Activated CD8-positive, alpha-beta T cell treated with anti-CD3 and anti-CD28 coated beads for 36 hours (primary cell): ENCODE measurements at regions of chr6 and their contacts with region 1.

Region 1: DNA sequence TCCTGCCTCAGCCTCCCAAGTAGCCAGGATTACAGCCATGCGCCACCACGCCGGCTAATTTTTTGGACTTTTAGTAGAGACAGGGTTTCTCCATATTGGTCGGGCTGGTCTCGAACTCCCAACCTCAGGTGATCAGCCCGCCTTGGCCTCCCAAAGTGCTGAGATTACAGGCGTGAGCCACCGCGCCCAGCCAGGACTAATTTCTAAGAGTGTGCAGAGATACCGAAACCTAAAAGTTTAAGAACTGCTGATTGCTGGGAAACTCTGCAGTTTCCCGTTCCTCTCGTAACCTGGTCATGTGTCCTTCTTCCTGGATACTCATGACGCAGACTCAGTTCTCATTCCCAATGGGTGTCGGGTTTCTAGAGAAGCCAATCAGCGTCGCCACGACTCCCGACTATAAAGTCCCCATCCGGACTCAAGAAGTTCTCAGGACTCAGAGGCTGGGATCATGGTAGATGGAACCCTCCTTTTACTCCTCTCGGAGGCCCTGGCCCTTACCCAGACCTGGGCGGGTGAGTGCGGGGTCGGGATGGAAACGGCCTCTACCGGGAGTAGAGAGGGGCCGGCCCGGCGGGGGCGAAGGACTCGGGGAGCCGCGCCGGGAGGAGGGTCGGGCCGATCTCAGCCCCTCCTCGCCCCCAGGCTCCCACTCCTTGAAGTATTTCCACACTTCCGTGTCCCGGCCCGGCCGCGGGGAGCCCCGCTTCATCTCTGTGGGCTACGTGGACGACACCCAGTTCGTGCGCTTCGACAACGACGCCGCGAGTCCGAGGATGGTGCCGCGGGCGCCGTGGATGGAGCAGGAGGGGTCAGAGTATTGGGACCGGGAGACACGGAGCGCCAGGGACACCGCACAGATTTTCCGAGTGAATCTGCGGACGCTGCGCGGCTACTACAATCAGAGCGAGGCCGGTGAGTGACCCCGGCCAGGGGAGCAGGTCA is at the start of gene HLA-E:
- DNase-seq: peak; percentile 94
- ATAC-seq: peak; percentile 75
- H3K4me3 Mint-ChIP-seq: peak within 1 kb of the TSS; percentile 97
- H3K27ac Mint-ChIP-seq: peak within 1 kb of the TSS; percentile 98
- H3K4me1 Mint-ChIP-seq: peaks cover 38% of the 10 kb centered on the region
- H3K27me3 Mint-ChIP-seq: no peaks in the 10 kb centered on the region
- CTCF ChIP-seq: no peak
- total RNA-seq, gene HLA-E: 493 to 499 TPM

Region 2: GRCh38 chr6:30500421-30501355 is 11.3 kb after region 1 on chr6:
- CTCF ChIA-PET with region 1: interaction called, 9 read pairs
- POLR2A ChIA-PET with region 1: interaction called, 97 read pairs
- intact Hi-C with region 1: no loop called
- DNase-seq: no peak
- ATAC-seq: peak; percentile 32
- H3K4me3 Mint-ChIP-seq: peak overlapping the region; percentile 67
- H3K27ac Mint-ChIP-seq: peak overlapping the region; percentile 79
- H3K4me1 Mint-ChIP-seq: peaks cover 46% of the 10 kb centered on the region
- H3K27me3 Mint-ChIP-seq: no peaks in the 10 kb centered on the region
- CTCF ChIP-seq: no peak

Region 3: DNA sequence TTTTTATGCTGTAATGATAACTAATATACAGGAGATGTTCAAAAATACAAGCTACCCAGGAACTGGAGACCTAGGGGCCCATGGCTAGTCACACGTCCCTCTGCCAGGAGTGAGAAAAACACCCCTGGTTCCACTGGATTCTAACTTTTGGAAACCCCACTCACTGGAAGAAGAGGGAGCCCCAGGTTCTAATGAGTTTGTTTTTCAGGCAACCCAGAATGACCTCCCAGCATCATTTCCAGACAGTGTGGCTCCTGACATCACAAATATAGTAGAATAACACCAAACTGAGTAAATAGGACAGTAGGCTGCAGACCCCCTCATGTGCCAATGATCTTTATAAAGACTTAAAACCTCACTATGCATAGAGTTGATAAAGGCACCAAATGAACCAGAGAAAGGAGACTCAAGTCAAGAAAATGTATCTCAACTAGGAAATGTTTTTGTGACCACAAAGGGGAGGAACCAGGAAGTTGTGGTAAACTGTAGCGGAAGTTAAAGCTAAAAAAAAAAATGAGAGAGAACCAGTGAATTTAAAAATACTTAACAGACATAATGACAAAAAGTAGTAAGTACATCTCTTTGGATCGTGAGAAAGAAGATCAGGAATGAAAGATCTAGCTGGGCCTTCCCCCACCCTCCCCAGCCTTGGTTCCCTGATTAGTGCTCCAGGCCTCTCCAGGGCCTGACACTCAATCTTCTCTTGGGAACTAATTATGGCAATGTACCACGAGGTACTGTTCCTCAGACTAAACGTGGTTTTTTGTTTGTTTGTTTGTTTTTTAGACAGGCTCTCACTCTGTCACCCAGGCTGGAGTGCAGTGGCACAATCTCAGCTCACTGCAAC is 19.8 kb after region 1 on chr6:
- CTCF ChIA-PET with region 1: interaction called, 24 read pairs
- POLR2A ChIA-PET with region 1: interaction called, 251 read pairs
- intact Hi-C with region 1: no loop called
- DNase-seq: peak; percentile 39
- ATAC-seq: peak; percentile 65
- H3K4me3 Mint-ChIP-seq: peak overlapping the region; percentile 48
- H3K27ac Mint-ChIP-seq: peak overlapping the region; percentile 95
- H3K4me1 Mint-ChIP-seq: peaks cover 53% of the 10 kb centered on the region
- H3K27me3 Mint-ChIP-seq: no peaks in the 10 kb centered on the region
- CTCF ChIP-seq: no peak

Region 4: DNA sequence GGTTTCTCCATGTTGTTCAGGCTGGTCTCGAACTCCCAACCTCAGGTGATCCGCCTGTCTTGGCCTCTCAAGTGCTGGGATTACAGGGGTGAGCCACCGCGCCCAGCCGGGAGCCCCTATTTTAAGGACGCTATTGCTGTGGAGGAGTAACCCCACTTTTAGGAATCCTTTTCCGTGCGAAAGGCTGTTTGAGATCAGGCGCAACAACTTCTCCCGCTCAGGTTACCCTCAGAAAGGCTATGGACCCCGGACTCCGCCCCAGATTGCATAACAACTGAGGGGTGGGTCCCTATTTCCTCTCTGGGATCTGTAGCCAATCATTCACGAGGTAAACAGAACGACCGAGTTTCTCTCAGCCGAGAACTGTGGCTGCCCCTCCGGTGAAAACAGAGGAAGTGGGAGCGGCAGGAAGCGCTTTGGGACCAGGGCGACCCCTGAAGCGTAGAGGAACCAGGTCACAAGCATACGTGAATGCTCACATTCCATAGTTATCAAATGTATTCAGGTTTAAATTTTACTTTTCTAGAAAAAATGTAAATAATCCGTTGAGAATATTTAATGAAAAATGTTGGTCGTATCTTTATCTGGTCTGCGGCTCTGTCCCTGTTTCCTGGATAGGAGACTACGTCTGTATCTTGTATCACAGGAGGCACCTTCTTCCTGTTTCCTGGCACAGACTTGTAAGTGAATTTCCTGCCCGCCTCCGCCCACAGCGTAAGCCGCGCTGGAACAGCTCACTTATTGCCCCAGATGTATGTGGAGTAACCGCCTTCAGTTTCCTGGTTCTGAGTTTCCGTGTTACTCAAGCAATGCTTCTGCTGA is 26.8 kb after region 1 on chr6:
- CTCF ChIA-PET with region 1: interaction called, 24 read pairs
- POLR2A ChIA-PET with region 1: interaction called, 251 read pairs
- intact Hi-C with region 1: no loop called
- DNase-seq: peak; percentile 98
- ATAC-seq: peak; percentile 89
- H3K4me3 Mint-ChIP-seq: peak overlapping the region; percentile 79
- H3K27ac Mint-ChIP-seq: peak overlapping the region; percentile 97
- H3K4me1 Mint-ChIP-seq: peaks cover 47% of the 10 kb centered on the region
- H3K27me3 Mint-ChIP-seq: no peaks in the 10 kb centered on the region
- CTCF ChIP-seq: no peak

Region 5: DNA sequence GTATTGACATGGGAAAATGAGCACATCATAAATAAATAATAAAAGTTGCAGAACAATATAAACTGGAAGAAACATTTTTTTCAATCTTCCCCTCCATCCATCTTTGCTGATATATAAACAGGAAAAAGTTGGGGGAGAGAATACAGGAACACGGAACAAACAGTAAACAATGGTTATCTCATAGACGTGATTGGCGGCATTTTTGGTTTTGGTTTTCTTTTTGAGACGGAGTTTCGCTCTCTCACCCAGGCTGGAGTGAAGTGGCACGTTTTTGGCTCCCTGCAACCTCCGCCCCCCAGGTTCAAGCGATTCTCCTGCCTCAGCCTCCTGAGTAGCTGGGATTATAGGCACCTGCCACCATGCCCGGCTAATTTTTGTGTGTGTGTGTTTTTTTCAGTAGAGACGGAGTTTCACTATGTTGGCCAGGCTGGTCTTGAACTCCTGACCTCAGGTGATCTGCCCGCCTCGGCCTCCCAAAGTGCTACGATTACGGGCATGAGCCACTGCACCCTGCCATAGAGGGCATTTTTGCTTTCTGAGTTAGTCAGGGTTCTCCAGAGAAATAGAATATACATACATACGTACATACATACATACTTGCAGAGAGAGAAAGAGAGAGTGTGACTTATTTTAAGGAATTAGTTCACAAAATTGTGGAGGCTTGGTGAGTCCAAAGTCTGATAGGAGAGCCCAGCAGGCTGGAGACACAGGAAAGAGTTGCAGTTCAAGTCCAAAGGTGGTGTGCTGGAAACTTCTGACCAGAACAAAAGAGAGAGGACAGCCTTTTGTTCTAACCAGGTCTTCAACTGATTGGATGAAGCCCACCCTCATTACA is 44.3 kb after region 1 on chr6:
- CTCF ChIA-PET with region 1: interaction called, 515 read pairs
- POLR2A ChIA-PET with region 1: interaction called, 177 read pairs
- intact Hi-C with region 1: loop called (anchors 2 kb)
- DNase-seq: no peak
- ATAC-seq: no peak
- H3K4me3 Mint-ChIP-seq: peak overlapping the region; percentile 41
- H3K27ac Mint-ChIP-seq: peak overlapping the region; percentile 89
- H3K4me1 Mint-ChIP-seq: peaks cover 43% of the 10 kb centered on the region
- H3K27me3 Mint-ChIP-seq: no peaks in the 10 kb centered on the region
- CTCF ChIP-seq: no peak

Region 6: DNA sequence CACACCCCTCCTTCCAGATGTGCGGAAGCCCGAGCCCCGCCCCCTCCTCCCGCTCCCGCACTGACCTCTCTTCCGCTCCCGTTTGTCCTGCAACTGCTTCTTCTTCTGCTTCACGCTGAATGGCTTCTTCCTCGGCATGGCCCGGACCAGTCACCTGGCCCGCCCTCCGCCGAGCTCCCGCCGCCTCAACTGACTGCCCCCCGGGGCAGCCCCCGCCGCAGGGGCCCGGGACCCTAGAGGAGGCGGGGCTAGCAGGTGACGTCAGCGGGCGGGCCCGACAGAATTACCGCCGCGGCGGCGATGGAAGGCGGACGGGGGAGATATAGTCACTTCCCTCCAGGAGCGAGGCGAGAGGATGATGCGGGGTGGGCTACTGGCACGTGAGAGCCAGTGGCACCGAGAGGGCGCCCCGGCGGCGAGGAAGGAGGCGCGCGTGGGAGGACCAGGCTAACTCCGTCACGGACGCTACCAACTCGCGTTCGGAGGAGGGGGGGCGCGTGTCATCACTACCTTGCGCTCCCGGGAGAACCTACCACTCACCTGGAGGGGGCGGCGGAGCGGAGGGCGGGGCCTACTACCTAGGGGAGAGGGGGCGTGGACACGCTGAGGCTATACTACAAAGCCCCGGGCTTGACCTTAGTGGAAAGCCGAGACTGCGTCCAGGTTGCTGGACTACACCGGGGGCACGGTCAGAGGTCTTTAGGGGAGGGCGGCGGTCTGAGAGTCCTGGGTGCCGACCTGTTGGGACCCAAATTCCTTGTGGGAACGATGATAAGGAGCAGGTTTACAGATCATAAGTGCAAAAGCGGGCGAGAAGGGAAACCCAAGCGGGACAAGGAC is 66.9 kb after region 1 on chr6 and contains the start of gene GNL1:
- CTCF ChIA-PET with region 1: interaction called, 515 read pairs
- POLR2A ChIA-PET with region 1: interaction called, 13 read pairs
- intact Hi-C with region 1: no loop called
- DNase-seq: peak; percentile 100
- ATAC-seq: peak; percentile 93
- H3K4me3 Mint-ChIP-seq: peak within 1 kb of the TSS; percentile 91
- H3K27ac Mint-ChIP-seq: peak within 1 kb of the TSS; percentile 99
- H3K4me1 Mint-ChIP-seq: peaks cover 35% of the 10 kb centered on the region
- H3K27me3 Mint-ChIP-seq: no peaks in the 10 kb centered on the region
- CTCF ChIP-seq: no peak
- total RNA-seq, gene GNL1: 107 to 122 TPM

Region 7: DNA sequence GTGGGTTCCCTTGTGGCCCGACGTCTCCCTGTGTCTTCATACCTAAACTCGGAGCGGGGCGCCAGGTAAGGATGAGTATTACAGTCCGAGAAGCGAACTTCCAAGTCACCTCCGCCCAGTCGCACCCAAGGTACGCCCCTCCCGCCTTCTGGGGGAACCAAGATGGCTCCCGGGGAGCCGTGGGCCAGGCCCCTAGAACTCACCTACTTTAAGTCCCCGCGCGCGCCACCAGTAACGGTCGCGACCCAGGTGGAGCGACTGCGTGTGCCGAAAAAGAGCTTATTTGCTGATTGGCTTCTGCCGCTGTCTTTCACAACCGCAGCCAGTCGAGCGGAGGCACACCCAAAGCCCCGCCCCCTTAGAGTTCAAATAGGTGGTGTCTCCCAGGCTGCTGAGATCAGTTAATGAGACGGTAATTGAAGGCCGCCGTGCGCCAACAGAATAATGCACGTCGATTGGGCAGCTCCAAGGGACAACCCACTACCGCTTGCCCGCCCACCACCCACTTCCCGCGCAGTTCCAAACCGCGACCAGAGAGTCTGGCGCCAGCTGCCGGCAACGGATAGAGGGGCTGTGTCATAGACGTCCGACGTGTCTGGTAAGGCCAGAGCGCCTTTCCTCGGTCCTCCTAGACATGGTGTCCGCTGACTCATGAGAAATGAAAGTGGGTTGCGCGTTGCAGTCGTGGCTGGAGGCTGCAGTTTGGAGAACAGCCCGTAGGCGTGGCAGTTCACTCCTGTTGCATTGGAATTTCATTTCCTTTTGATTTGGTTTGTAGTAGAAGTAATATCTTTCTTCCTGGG is 227.9 kb after region 1 on chr6 and contains the start of gene MDC1:
- CTCF ChIA-PET with region 1: no interaction called
- POLR2A ChIA-PET with region 1: no interaction called
- intact Hi-C with region 1: no loop called
- DNase-seq: peak; percentile 100
- ATAC-seq: peak; percentile 78
- H3K4me3 Mint-ChIP-seq: peak within 1 kb of the TSS; percentile 80
- H3K27ac Mint-ChIP-seq: peak within 1 kb of the TSS; percentile 99
- H3K4me1 Mint-ChIP-seq: peaks cover 37% of the 10 kb centered on the region
- H3K27me3 Mint-ChIP-seq: no peaks in the 10 kb centered on the region
- CTCF ChIP-seq: no peak
- total RNA-seq, gene MDC1: 80.4 to 90.7 TPM